ENCODE measurements at regions of chr14 and their contacts with region 1.

Region 1: DNA sequence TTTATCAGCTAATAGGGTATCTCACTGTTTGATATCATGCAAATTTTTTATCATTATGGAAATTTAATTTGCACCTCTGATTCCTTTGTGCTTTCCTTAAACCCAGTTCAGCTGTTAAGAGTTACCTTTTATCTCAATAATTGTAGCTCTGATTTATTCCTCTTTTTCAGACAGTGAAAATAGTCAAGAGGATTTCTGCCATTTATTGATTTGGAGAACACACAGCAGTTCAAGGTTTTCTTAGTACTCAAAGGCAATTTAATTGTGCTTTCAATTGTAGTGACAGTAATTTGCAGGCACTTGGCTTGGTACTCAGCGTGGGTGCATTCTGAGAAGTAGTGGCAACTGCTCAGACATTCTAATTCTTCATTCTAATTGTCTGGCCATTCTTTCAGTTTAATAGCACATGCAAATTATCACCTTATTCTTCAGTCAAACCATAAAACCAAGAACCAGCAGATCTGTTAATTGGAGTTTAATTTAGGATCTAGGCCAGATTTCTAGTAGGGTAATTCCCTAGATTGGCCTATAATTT is 709.3 kb downstream of the RPS29 start:
- DNase-seq: no peak
- H3K4me3 ChIP-seq: no peak overlapping the region
- CTCF ChIP-seq: no peak
- POLR2A ChIP-seq: no peak

Region 2: DNA sequence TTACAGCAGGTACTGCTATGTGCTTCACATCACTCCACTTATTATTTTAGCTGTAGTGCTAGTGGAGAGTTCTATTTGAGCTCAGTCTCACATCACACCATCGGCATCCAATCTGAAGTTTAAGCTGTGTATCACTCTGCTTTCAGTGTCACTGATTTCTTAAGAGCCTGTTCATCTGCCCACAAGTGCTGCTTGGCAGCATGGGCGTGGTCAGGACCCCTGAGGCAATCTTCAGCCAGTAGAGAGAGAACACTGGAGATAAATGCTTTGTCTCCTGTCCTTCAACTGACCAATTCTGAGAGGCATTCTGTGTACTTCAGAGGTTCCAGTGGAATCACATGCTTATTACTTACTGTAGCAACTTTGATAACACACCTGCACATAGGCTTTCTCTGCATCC is 19.5 kb before region 1 on chr14:
- intact Hi-C with region 1: loop called (anchors 1 kb)
- DNase-seq: no peak
- H3K4me3 ChIP-seq: no peak overlapping the region
- CTCF ChIP-seq: no peak
- POLR2A ChIP-seq: no peak

Measured in lower leg skin (tissue), 4 donors.